ENCODE measurements at regions of chr4 and their contacts with region 1.

Region 1: GRCh38 chr4:159175085-159175988 is 72.5 kb downstream of the RAPGEF2 start:
- DNase-seq: peak; percentile 80
- H3K4me3 ChIP-seq: peak overlapping the region; percentile 8 to 28 (median 24)
- H3K27ac ChIP-seq: peak overlapping the region; percentile 28
- H3K4me1 ChIP-seq: peaks cover 16% of the 10 kb centered on the region
- H3K27me3 ChIP-seq: no peaks in the 10 kb centered on the region
- CTCF ChIP-seq: peak; percentile 60 to 76

Region 2: DNA sequence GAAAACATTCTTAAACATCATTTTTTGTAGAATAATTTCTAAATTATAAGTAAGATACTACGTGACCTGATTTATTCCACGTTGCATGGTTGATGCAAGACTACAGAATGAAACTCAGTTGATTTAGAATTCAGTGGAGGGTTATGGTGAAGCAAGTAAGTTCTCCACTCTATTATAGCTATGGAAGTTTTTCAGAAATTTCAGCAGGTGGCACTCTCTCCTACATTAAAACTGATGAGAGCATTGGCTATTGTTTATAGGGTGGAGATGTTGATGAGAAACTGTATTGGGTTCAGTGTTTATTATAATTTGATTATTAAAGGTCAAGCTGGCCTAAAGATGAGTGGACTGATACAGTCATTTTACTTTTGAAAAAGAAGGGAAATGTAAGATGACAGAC is 318.5 kb before region 1 on chr4:
- CTCF ChIA-PET with region 1: interaction called, 5 read pairs
- dilution Hi-C with region 1: no loop called
- in situ Hi-C with region 1: loop called in 1 of 2 experiments (anchors 10 kb)
- intact Hi-C with region 1: loop called (anchors 1 kb)
- DNase-seq: peak; percentile 25
- H3K4me3 ChIP-seq: no peak overlapping the region
- H3K27ac ChIP-seq: no peak overlapping the region
- H3K4me1 ChIP-seq: no peaks in the 10 kb centered on the region
- H3K27me3 ChIP-seq: no peaks in the 10 kb centered on the region
- CTCF ChIP-seq: peak; percentile 44 to 63

Region 3: GRCh38 chr4:158873795-158874401 is 301.4 kb before region 1 on chr4:
- CTCF ChIA-PET with region 1: no interaction called
- dilution Hi-C with region 1: no loop called
- in situ Hi-C with region 1: loop called in 1 of 2 experiments (anchors 5 kb)
- intact Hi-C with region 1: no loop called
- DNase-seq: peak; percentile 87
- H3K4me3 ChIP-seq: no peak overlapping the region
- H3K27ac ChIP-seq: no peak overlapping the region
- H3K4me1 ChIP-seq: peaks cover 18% of the 10 kb centered on the region
- H3K27me3 ChIP-seq: no peaks in the 10 kb centered on the region
- CTCF ChIP-seq: no peak

Region 4: DNA sequence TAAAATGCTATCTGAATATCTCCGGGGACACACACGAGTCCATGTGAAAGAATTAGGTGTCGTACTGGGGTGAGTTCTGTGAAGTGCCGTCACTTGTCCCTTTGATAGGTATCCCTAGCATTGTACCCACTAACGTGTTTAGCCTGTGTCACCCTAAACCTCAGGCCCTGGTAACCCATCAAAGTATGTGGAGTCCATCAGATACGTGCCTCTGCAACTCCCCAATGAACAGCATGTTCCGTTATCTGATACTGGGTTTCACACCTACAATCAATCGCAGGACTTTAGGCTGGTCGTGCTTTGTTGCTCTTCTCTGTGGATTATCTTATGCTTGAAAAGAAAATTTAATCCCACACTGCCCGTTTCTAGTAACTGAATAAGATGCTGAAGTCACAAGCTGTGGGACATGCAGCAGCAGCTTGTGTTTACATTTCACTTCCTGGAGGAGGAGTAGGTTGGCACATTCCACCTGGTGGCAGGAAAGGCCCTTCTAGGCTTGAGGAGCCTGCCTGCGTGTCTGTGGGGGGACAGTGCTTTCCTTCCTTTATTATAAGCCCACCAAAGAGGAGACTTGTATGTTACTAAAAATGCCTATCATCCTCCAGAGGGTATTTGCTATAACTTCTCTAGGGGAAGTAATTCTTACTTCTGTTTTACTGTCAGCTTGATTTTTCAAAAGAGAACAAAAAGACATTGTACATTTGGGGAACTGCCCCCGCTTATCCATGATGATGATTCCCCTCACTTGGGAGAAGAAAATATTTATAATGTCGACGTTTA is 279.4 kb before region 1 on chr4:
- CTCF ChIA-PET with region 1: no interaction called
- dilution Hi-C with region 1: no loop called
- in situ Hi-C with region 1: no loop called
- intact Hi-C with region 1: loop called (anchors 1 kb)
- DNase-seq: peak; percentile 5
- H3K4me3 ChIP-seq: no peak overlapping the region
- H3K27ac ChIP-seq: no peak overlapping the region
- H3K4me1 ChIP-seq: no peaks in the 10 kb centered on the region
- H3K27me3 ChIP-seq: no peaks in the 10 kb centered on the region
- CTCF ChIP-seq: peak in 1 of 2 donors; percentile 53

Region 5: DNA sequence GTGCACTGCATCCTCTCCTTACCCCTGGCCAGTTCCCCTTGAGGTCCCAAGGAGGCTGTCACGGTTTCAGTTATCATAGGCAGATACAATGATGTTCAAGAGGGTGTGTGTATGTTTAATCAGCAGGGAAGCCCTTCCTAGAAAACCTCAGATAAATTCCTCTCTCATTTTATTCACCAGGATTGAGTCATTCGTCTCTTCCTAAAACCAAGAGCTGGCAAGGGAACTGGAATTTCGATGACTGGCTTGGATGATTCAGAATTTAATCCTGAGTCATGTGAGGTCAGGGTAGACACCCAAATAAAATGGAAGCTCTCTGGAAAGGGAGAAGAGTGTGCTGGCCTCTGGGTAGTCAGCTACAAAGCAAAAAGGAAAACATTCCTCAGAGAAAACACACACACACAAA is 178.7 kb before region 1 on chr4:
- CTCF ChIA-PET with region 1: no interaction called
- dilution Hi-C with region 1: no loop called
- in situ Hi-C with region 1: no loop called
- intact Hi-C with region 1: loop called (anchors 10 kb)
- DNase-seq: peak; percentile 99
- H3K4me3 ChIP-seq: no peak overlapping the region
- H3K27ac ChIP-seq: peak overlapping the region; percentile 82
- H3K4me1 ChIP-seq: peaks cover 22% of the 10 kb centered on the region
- H3K27me3 ChIP-seq: no peaks in the 10 kb centered on the region
- CTCF ChIP-seq: no peak

Region 6: GRCh38 chr4:159060161-159060560 is 115.2 kb before region 1 on chr4:
- CTCF ChIA-PET with region 1: no interaction called
- dilution Hi-C with region 1: no loop called
- in situ Hi-C with region 1: no loop called
- intact Hi-C with region 1: no loop called
- DNase-seq: no peak
- H3K4me3 ChIP-seq: no peak overlapping the region
- H3K27ac ChIP-seq: no peak overlapping the region
- H3K4me1 ChIP-seq: no peaks in the 10 kb centered on the region
- H3K27me3 ChIP-seq: no peaks in the 10 kb centered on the region
- CTCF ChIP-seq: no peak

Region 7: DNA sequence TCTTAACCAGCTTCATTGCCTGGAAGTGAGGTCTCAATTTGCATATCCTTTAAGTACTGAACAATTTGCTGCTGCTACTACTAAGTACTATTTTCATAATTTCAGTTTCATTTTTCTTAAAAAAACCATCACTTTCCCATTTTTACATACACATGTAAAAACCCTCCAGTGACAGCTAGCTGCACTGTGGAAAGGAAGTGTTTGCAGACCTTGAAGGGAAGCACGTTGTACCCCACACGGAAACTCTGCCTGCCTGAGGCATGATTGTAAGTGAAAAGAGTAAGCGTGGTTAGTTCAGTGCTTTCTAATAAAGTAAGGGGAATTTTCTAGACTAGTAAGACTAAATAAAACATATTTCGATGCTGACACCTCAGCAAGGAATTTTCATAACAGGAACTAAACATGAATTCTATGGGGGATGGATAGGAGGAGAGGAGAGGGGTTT is 31.1 kb after region 1 on chr4:
- CTCF ChIA-PET with region 1: no interaction called
- dilution Hi-C with region 1: no loop called
- in situ Hi-C with region 1: no loop called
- intact Hi-C with region 1: loop called (anchors 1 kb)
- DNase-seq: peak; percentile 60
- H3K4me3 ChIP-seq: peak overlapping the region in 1 of 3 experiments; percentile 20
- H3K27ac ChIP-seq: peak overlapping the region; percentile 20
- H3K4me1 ChIP-seq: peaks cover 7% of the 10 kb centered on the region
- H3K27me3 ChIP-seq: no peaks in the 10 kb centered on the region
- CTCF ChIP-seq: no peak